Naive thymus-derived CD4-positive, alpha-beta T cell (primary cell): ENCODE measurements at regions of chr19 and their contacts with region 1.

Region 1: GRCh38 chr19:860481-861101 is 1.1 kb downstream of the CFD start:
- DNase-seq: peak in 8 of 9 donors; percentile 46 to 69 (median 58)
- ATAC-seq: peak; percentile 55
- H3K4me3 ChIP-seq: no peak overlapping the region
- H3K4me3 Mint-ChIP-seq: peak overlapping the region in 6 of 10 donors; percentile 17 to 64 (median 46)
- H3K27ac ChIP-seq: no peak overlapping the region
- H3K27ac Mint-ChIP-seq: no peak overlapping the region
- H3K4me1 ChIP-seq: peaks cover 14 to 23% of the 10 kb centered on the region in 2 donors
- H3K4me1 Mint-ChIP-seq: peaks cover 0 to 21% (median 16%) of the 10 kb centered on the region in 7 donors
- H3K27me3 ChIP-seq: no peaks in the 10 kb centered on the region
- H3K27me3 Mint-ChIP-seq: peaks cover 0 to 18% (median 0%) of the 10 kb centered on the region in 5 donors

Region 2: GRCh38 chr19:843180-843835 is 17.3 kb before region 1 on chr19:
- CTCF ChIA-PET with region 1: no interaction called
- POLR2A ChIA-PET with region 1: no interaction called
- intact Hi-C with region 1: no loop called
- DNase-seq: no peak
- ATAC-seq: no peak
- H3K4me3 ChIP-seq: no peak overlapping the region
- H3K4me3 Mint-ChIP-seq: peak overlapping the region in 5 of 10 donors; percentile 7 to 32 (median 19)
- H3K27ac ChIP-seq: no peak overlapping the region
- H3K27ac Mint-ChIP-seq: no peak overlapping the region
- H3K4me1 ChIP-seq: no peaks in the 10 kb centered on the region
- H3K4me1 Mint-ChIP-seq: peaks cover 0 to 8% (median 4%) of the 10 kb centered on the region in 7 donors
- H3K27me3 ChIP-seq: peaks cover 2 to 19% of the 10 kb centered on the region in 2 donors
- H3K27me3 Mint-ChIP-seq: peaks cover 18 to 41% (median 35%) of the 10 kb centered on the region in 5 donors

Region 3: GRCh38 chr19:872266-872951 is 11.8 kb after region 1 on chr19:
- CTCF ChIA-PET with region 1: interaction called, 5 read pairs
- POLR2A ChIA-PET with region 1: interaction called, 5 read pairs
- intact Hi-C with region 1: loop called (anchors 1 kb)
- DNase-seq: peak; percentile 63 to 91 (median 80)
- ATAC-seq: peak; percentile 86
- H3K4me3 ChIP-seq: peak overlapping the region; percentile 37
- H3K4me3 Mint-ChIP-seq: peak overlapping the region; percentile 72 to 86 (median 82)
- H3K27ac ChIP-seq: peak overlapping the region; percentile 54
- H3K27ac Mint-ChIP-seq: peak overlapping the region; percentile 86 to 95 (median 92)
- H3K4me1 ChIP-seq: peaks cover 8 to 14% of the 10 kb centered on the region in 2 donors
- H3K4me1 Mint-ChIP-seq: peaks cover 0 to 27% (median 12%) of the 10 kb centered on the region in 7 donors
- H3K27me3 ChIP-seq: no peaks in the 10 kb centered on the region
- H3K27me3 Mint-ChIP-seq: peaks cover 0 to 2% (median 0%) of the 10 kb centered on the region in 5 donors

Region 4: DNA sequence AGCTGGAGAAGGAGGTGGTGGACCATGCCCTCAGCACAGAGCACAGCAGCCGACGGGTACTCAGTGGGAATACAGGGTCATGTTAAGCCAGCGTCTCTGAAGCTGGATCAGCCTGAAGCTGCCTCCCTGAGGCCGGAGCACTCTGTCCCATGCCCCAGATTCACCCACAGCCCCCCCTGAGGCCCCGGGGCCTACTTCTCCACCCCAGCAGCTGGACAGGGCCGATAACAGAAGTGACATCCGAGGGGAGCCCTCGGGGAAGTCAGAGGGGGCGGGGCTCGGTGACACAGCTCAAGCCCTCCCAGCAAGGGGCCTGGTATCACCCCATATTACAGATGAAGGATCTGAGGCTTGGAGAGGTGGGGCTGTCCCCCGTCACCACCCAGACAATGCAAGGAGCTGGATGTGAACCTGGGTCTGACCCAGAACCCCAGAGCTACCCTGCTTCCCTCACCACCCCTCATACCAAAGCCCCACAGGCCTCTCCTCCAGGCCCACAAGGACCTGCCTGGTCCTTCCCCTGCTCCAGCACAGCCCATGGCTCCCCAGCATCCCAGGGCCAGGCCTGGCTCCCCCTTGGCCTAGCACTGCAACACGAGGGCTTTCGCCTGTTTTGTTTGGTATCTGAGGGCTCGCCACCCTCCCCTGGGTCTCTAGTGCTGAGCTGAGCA is 46.7 kb after region 1 on chr19:
- CTCF ChIA-PET with region 1: interaction called, 14 read pairs
- POLR2A ChIA-PET with region 1: interaction called, 54 read pairs
- intact Hi-C with region 1: loop called in 1 of 2 experiments (anchors 2 kb)
- DNase-seq: peak in 2 of 9 donors; percentile 11 to 50
- ATAC-seq: peak; percentile 13
- H3K4me3 ChIP-seq: no peak overlapping the region
- H3K4me3 Mint-ChIP-seq: peak overlapping the region; percentile 26 to 91 (median 79)
- H3K27ac ChIP-seq: peak overlapping the region; percentile 95
- H3K27ac Mint-ChIP-seq: peak overlapping the region; percentile 100
- H3K4me1 ChIP-seq: peaks cover 34 to 42% of the 10 kb centered on the region in 2 donors
- H3K4me1 Mint-ChIP-seq: peaks cover 27 to 81% (median 52%) of the 10 kb centered on the region in 7 donors
- H3K27me3 ChIP-seq: no peaks in the 10 kb centered on the region
- H3K27me3 Mint-ChIP-seq: no peaks in the 10 kb centered on the region

Region 5: DNA sequence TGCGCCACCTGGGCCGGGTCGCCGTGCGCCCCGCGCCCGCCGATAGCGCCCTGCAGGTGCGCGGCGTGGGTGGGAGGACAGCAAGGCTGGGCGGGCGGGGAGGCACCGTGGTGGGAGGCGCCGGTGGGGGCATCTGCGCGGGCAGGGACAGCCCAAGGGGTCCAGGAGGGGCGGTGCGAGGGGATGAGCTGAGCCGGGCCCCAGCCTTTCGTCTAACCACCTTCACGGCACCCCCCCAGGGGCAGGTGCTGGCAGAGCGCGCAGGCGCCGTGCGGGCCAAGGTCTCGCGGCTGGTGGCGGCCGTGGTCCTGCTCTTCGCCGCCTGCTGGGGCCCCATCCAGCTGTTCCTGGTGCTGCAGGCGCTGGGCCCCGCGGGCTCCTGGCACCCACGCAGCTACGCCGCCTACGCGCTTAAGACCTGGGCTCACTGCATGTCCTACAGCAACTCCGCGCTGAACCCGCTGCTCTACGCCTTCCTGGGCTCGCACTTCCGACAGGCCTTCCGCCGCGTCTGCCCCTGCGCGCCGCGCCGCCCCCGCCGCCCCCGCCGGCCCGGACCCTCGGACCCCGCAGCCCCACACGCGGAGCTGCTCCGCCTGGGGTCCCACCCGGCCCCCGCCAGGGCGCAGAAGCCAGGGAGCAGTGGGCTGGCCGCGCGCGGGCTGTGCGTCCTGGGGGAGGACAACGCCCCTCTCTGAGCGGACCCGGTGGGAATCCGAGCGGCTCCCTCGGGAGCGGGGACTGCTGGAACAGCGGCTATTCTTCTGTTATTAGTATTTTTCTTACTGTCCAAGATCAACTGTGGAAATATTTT is 59.7 kb after region 1 on chr19:
- CTCF ChIA-PET with region 1: interaction called, 26 read pairs
- POLR2A ChIA-PET with region 1: interaction called, 82 read pairs
- intact Hi-C with region 1: loop called (anchors 1 kb)
- DNase-seq: peak; percentile 61 to 77 (median 76)
- ATAC-seq: peak; percentile 70
- H3K4me3 ChIP-seq: peak overlapping the region; percentile 21
- H3K4me3 Mint-ChIP-seq: peak overlapping the region; percentile 74 to 91 (median 85)
- H3K27ac ChIP-seq: peak overlapping the region; percentile 64
- H3K27ac Mint-ChIP-seq: peak overlapping the region in 8 of 9 donors; percentile 51 to 97 (median 80)
- H3K4me1 ChIP-seq: peaks cover 9 to 15% of the 10 kb centered on the region in 2 donors
- H3K4me1 Mint-ChIP-seq: peaks cover 5 to 26% (median 18%) of the 10 kb centered on the region in 7 donors
- H3K27me3 ChIP-seq: no peaks in the 10 kb centered on the region
- H3K27me3 Mint-ChIP-seq: peaks cover 0 to 5% (median 0%) of the 10 kb centered on the region in 5 donors

Region 6: GRCh38 chr19:1001538-1002166 is 141.1 kb after region 1 on chr19:
- CTCF ChIA-PET with region 1: no interaction called
- POLR2A ChIA-PET with region 1: no interaction called
- intact Hi-C with region 1: loop called in 1 of 2 experiments (anchors 1 kb)
- DNase-seq: peak; percentile 45 to 82 (median 70)
- ATAC-seq: peak; percentile 83
- H3K4me3 ChIP-seq: no peak overlapping the region
- H3K4me3 Mint-ChIP-seq: peak overlapping the region in 4 of 10 donors; percentile 21 to 75 (median 44)
- H3K27ac ChIP-seq: no peak overlapping the region
- H3K27ac Mint-ChIP-seq: peak overlapping the region in 1 of 9 donors; percentile 24
- H3K4me1 ChIP-seq: peaks cover 14 to 17% of the 10 kb centered on the region in 2 donors
- H3K4me1 Mint-ChIP-seq: peaks cover 1 to 13% (median 7%) of the 10 kb centered on the region in 7 donors
- H3K27me3 ChIP-seq: peaks cover 5 to 6% of the 10 kb centered on the region in 2 donors
- H3K27me3 Mint-ChIP-seq: peaks cover 7 to 39% (median 20%) of the 10 kb centered on the region in 5 donors